ENCODE measurements at regions of chr17 and their contacts with region 1.

Region 1: GRCh38 chr17:32503251-32504165 is 16.7 kb downstream of the CDK5R1 start:
- DNase-seq: peak; percentile 52
- H3K4me3 Mint-ChIP-seq: peak overlapping the region; percentile 63
- H3K27ac Mint-ChIP-seq: peak overlapping the region; percentile 92
- H3K4me1 Mint-ChIP-seq: peaks cover 42% of the 10 kb centered on the region
- H3K27me3 Mint-ChIP-seq: peaks cover 4% of the 10 kb centered on the region

Region 2: GRCh38 chr17:32283745-32284201 is 219.7 kb before region 1 on chr17:
- intact Hi-C with region 1: no loop called
- DNase-seq: no peak
- H3K4me3 Mint-ChIP-seq: no peak overlapping the region
- H3K27ac Mint-ChIP-seq: no peak overlapping the region
- H3K4me1 Mint-ChIP-seq: no peaks in the 10 kb centered on the region
- H3K27me3 Mint-ChIP-seq: peaks cover 8% of the 10 kb centered on the region

Region 3: DNA sequence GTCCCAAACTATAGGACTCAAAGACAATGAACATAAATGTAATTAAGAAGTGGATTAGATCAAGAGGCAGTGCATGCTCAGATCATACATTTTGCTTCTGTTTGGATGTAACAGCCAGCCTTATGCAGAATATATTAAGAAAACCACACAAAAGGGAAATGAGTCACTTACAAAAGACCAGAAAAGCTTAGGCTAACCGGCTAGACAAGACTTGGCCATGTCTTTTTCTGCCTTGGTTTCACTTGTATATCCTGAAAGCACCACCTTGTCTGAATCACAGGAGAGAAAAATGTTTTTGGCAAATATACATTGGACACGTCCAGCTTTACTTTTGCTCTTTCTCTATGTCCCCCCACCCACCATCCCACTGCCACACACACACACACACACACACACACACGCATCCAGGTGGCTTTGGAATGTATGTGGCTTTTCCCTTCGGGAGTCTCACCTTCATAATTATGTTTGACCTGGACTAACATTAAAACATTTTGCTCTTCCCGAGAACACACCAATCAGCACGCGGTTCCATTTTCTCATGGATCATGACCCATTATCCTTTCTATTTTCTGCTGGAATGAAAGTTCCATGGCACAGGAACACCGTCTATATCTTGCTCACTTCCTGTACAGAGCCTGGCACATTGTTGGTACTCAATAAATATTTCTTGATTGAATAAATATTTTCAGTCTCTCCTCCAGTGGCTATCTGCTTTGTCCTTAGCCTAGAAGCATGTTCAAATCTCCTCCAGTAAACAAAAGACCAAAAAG is 47.9 kb after region 1 on chr17:
- intact Hi-C with region 1: loop called (anchors 5 kb)
- DNase-seq: no peak
- H3K4me3 Mint-ChIP-seq: peak overlapping the region; percentile 32
- H3K27ac Mint-ChIP-seq: peak overlapping the region; percentile 35
- H3K4me1 Mint-ChIP-seq: peaks cover 58% of the 10 kb centered on the region
- H3K27me3 Mint-ChIP-seq: peaks cover 4% of the 10 kb centered on the region

Region 4: DNA sequence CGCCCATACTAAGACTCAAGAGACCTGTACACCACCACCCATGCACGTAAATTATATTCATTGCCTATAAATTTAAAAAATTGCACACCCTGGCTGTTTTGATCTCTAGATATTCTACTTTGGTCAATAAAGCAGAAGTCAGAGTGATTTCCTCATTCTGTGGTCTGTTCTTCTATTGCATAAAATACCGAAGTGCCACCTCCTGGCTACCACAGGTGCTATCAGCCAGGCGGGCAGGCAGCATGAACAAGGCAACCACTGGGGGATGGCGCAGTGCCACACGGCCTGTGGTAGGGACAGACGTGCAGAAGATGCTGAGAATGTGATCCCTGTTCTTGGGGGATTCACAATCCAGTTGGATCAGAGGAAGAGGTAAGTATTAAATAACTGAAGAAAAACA is 105.6 kb after region 1 on chr17:
- intact Hi-C with region 1: loop called (anchors 5 kb)
- DNase-seq: peak; percentile 37
- H3K4me3 Mint-ChIP-seq: no peak overlapping the region
- H3K27ac Mint-ChIP-seq: no peak overlapping the region
- H3K4me1 Mint-ChIP-seq: peaks cover 7% of the 10 kb centered on the region
- H3K27me3 Mint-ChIP-seq: peaks cover 5% of the 10 kb centered on the region

Region 5: DNA sequence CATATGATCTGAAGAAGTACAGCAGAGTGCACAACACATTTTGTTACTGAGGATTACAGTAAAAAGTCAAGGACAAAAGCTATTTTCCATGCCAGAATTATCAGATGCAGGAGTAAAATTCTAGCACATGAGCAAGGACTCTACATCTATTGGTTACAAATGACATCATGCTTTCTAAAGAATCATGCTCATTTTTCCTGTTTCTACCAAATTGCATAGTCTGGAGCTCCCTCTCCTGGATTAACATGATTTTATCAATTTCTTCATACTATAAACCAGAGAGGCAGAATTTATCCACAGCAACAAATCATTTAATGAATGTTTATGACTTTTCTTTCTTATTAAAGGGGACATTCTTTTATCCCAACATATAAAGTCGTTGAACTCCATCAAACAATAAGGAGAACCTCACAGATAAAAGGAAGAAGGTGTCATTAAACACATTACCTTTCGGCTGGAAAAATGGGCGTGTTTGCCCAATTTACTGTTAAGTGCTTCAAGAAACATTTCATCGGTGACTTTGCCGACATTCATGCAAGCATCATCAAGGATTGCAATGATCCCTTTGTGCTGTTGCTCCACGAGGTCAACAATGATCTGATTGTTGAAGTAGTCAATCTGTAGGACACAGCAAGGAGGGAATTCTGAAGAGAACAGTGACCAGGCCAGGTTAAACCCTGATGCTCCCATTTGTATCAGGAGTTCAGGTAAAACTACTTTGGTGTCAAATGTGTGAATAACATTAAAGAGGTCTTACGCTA is 251.7 kb after region 1 on chr17:
- intact Hi-C with region 1: no loop called
- DNase-seq: no peak
- H3K4me3 Mint-ChIP-seq: no peak overlapping the region
- H3K27ac Mint-ChIP-seq: no peak overlapping the region
- H3K4me1 Mint-ChIP-seq: peaks cover 5% of the 10 kb centered on the region
- H3K27me3 Mint-ChIP-seq: peaks cover 3% of the 10 kb centered on the region